PC-3 (cell line): ENCODE measurements at regions of chr3 and their contacts with region 1.

Region 1: GRCh38 chr3:13537921-13538320 is 11.0 kb upstream of the FBLN2 start:
- DNase-seq: peak; percentile 96
- ATAC-seq: peak; percentile 89
- H3K4me3 ChIP-seq: no peak overlapping the region
- H3K27ac ChIP-seq: peak overlapping the region; percentile 88
- H3K4me1 ChIP-seq: peaks cover 38% of the 10 kb centered on the region
- H3K27me3 ChIP-seq: no peaks in the 10 kb centered on the region
- CTCF ChIP-seq: no peak

Region 2: DNA sequence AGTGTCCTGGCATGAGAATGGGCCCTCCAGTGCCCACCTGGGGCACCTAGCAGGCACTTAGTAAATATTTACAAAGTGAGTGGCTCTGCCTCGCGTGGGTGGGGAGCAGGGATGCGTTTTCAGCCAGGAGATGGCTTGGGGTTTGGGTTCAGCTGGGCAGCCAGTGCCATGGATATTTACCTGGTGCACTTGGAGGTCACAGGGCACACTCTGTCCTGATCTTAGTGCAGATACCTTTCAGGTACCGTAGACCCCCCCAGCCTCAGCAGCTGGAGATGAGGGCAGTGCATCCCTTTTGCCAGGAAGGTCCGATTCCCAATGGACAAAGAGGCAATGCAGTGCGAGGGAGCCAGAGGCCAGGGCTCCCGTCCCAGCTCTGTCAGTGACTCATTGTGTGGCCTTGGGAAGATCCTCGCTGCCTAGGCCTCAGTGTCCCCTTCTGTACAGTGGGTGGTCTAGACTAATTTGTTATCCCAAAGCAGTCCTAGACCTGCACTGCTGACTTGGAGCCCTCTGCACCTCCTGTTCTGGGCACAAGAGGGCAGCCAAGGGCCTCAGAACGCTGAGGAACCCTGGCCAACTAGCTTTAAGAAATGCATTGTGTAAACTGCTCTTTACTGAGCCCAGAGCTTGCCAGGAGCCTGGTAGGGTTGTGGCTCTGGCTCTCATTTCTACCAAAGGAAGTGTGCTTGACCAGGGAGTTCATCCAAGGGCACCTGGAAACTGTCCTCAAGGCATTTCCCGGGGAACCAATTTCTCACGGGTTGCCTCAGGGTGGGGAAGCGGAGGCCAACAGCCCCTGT is 41.8 kb before region 1 on chr3:
- CTCF ChIA-PET with region 1: no interaction called
- POLR2A ChIA-PET with region 1: no interaction called
- intact Hi-C with region 1: loop called (anchors 2 kb)
- DNase-seq: peak; percentile 92
- ATAC-seq: peak; percentile 91
- H3K4me3 ChIP-seq: no peak overlapping the region
- H3K27ac ChIP-seq: peak overlapping the region; percentile 25; the same call in 1 of the 2 replicates
- H3K4me1 ChIP-seq: peaks cover 11% of the 10 kb centered on the region
- H3K27me3 ChIP-seq: no peaks in the 10 kb centered on the region
- CTCF ChIP-seq: peak; percentile 96

Region 3: DNA sequence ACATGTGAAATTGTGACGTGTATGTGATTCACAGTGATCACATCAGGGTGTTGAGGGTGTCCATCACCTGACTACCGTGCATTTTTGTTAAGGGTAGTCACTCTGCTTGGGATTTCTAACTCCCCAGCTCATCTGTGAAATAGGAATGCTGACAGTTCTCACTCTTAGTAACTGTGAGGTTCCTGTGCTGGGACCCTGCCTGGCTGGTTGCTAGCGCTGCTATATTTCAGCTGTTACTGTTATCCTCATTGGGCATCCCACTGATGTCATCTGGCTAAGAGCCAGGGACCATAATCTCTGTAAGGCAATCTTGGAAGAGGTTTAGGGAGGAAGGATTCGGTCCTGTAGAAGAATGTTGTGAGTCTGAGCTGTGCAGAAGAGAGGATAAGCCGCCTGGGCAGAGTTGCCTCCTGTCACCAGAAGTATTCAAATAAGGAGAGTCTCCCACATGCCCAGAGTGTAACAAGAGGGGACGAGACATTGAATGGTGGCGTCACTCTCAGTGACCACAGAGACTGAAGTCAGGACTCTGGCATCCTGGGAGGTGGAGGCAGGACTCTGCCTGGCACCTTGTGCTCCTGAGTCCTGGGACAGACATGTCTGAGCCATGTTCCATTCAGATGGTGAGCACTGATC is 63.1 kb after region 1 on chr3:
- CTCF ChIA-PET with region 1: no interaction called
- POLR2A ChIA-PET with region 1: no interaction called
- intact Hi-C with region 1: loop called (anchors 2 kb)
- DNase-seq: peak; percentile 98
- ATAC-seq: peak; percentile 80
- H3K4me3 ChIP-seq: no peak overlapping the region
- H3K27ac ChIP-seq: peak overlapping the region; percentile 86
- H3K4me1 ChIP-seq: peaks cover 39% of the 10 kb centered on the region
- H3K27me3 ChIP-seq: no peaks in the 10 kb centered on the region
- CTCF ChIP-seq: no peak